Heart right ventricle (tissue), 16 donors: ENCODE measurements at regions of chr6 and their contacts with region 1.

Region 1: DNA sequence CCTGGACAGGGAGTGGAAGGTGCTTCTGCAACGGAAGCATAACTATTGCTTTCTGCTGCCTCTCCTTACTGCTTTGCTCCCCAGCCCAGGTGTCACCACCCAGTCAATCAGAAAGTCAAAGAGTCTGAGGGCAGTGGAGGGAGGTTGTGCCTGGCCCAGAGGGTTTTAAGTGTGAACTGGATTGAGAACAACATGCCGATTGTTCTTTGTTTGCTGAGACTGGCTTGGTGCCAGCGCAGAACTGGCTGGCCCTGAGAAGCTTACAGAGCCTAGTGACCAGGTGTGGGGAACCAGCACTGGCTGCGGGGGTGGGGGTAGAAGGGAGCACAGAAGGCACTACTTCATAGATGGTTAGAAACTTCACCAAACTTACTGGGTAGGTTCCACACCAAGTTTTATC is 31.1 kb upstream of the ENPP4 start:
- DNase-seq: peak; percentile 7 to 19
- ATAC-seq: peak in 5 of 8 donors; percentile 7 to 71 (median 45)
- H3K4me3 ChIP-seq: no peak overlapping the region
- H3K27ac ChIP-seq: no peak overlapping the region
- H3K4me1 ChIP-seq: peaks cover 0 to 10% (median 0%) of the 10 kb centered on the region in 9 donors
- H3K27me3 ChIP-seq: no peaks in the 10 kb centered on the region
- CTCF ChIP-seq: no peak

Region 2: DNA sequence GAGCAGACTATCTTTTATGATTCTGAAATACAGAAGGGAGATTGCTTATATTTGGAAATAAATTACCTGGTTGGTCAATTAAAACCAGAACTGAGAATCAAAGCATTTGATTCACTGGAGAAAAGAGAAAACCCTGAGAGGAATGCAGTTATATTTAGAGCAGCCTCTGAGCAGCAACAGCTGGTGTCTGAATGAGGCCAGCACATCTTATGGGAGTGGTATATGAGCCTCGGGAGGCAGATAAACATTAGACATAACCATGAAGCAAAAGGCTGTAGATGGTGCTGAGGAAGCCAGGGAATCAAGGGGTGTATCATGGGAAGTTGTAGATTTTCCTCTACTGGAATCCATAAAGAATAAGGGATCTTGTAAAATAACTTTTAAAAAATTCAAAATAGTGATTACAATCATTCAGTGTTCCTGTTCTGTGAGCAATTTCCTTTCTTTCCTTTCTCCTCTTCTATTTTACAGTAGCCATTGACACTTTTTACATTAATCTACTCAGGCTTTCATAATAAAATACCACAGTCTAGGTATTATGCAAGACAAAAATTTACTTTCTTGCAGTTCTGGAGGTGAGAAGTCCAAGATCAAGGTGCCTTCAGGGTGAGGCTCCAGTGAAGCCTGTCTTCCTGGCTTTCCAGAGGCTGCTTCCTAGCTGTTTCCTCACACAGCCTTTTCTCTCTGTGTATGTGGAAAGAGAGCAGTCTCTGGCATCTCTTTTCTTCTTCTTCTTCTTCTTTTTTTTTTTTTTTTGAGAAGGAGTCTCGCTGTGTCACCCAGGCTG is 104.9 kb after region 1 on chr6:
- intact Hi-C with region 1: loop called in 4 of 10 experiments (anchors 5 to 10 kb)
- DNase-seq: no peak
- ATAC-seq: no peak
- H3K4me3 ChIP-seq: no peak overlapping the region
- H3K27ac ChIP-seq: no peak overlapping the region
- H3K4me1 ChIP-seq: peaks cover 0 to 8% (median 0%) of the 10 kb centered on the region in 9 donors
- H3K27me3 ChIP-seq: no peaks in the 10 kb centered on the region
- CTCF ChIP-seq: no peak